ENCODE measurements at regions of chr11 and their contacts with region 1.

Region 1: GRCh38 chr11:61567286-61568061 is 13.4 kb downstream of the SYT7 start:
- H3K4me3 ChIP-seq: no peak overlapping the region; the same call in 1 of the 2 replicates
- H3K27ac ChIP-seq: no peak overlapping the region
- H3K4me1 ChIP-seq: no peaks in the 10 kb centered on the region
- CTCF ChIP-seq: 0 out of 2 replicates have a peak, but pooled peaks have one; percentile 29

Region 2: GRCh38 chr11:61532139-61533038 is 35.1 kb before region 1 on chr11:
- CTCF ChIA-PET with region 1: interaction called, 17 read pairs
- POLR2A ChIA-PET with region 1: no interaction called
- H3K4me3 ChIP-seq: no peak overlapping the region
- H3K27ac ChIP-seq: no peak overlapping the region
- H3K4me1 ChIP-seq: no peaks in the 10 kb centered on the region
- CTCF ChIP-seq: peak; percentile 45; the same call in 1 of the 2 replicates

Region 3: DNA sequence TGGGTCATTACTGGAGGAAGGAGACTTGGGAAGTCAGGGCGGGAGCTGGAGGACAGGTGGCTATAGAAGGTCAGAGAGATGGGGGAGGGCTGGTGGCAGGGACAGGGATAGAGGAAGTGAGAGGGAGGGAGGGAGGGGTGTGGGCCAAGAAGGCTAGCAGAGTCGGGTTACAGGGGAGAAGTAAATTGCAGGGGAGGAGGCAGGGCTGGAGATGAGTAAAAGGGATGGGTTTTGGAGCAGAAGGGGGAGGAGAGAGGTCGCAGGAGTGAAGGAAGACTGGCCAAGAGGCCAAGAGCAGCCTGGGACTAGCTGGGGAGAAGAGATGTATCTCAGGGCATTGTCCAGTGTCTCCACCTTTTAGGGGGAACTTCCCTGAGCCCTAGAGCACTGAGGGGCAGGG is 25.9 kb before region 1 on chr11:
- CTCF ChIA-PET with region 1: interaction called, 11 read pairs
- POLR2A ChIA-PET with region 1: no interaction called
- H3K4me3 ChIP-seq: no peak overlapping the region
- H3K27ac ChIP-seq: no peak overlapping the region
- H3K4me1 ChIP-seq: no peaks in the 10 kb centered on the region
- CTCF ChIP-seq: no peak

Region 4: DNA sequence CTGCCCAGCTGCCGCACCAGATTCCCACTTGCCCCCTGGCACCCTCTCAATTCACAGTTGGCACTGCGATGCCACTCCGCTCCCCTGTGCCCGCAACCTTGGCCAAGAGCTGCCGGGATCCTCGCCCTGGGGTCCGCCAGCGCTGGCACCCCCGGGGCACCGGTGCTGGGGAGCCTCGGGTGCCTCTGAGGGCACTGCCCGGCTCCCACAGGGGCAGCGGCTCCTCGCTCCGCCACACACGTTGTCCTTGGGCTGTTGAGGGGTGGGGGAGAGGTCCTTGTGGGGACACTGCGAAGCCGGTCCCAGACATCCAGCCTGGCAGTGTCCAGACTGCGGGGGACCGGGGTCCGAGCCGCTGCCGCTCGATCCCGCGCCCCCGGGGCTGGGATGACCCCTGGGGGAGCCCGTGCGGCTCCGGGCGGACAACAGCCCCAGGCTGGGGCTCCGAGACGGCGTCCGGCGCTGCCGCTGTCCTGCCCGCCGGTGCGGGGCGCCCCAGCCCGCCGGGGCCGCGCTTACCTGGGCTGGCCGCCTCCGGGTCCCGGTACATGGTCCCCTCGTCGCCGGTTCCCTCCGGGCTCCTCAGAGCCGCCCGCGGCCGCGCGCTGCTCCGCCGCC is 12.9 kb after region 1 on chr11:
- CTCF ChIA-PET with region 1: interaction called, 27 read pairs
- POLR2A ChIA-PET with region 1: interaction called, 10 read pairs
- H3K4me3 ChIP-seq: peak overlapping the region; percentile 28
- H3K27ac ChIP-seq: no peak overlapping the region; the same call in 1 of the 2 replicates
- H3K4me1 ChIP-seq: no peaks in the 10 kb centered on the region; the same call in 1 of the 2 replicates
- CTCF ChIP-seq: no peak

Region 5: GRCh38 chr11:61627567-61628445 is 60.3 kb after region 1 on chr11:
- CTCF ChIA-PET with region 1: interaction called, 12 read pairs
- POLR2A ChIA-PET with region 1: no interaction called
- H3K4me3 ChIP-seq: no peak overlapping the region
- H3K27ac ChIP-seq: no peak overlapping the region
- H3K4me1 ChIP-seq: no peaks in the 10 kb centered on the region
- CTCF ChIP-seq: 0 out of 2 replicates have a peak, but pooled peaks have one; percentile 31

Region 6: DNA sequence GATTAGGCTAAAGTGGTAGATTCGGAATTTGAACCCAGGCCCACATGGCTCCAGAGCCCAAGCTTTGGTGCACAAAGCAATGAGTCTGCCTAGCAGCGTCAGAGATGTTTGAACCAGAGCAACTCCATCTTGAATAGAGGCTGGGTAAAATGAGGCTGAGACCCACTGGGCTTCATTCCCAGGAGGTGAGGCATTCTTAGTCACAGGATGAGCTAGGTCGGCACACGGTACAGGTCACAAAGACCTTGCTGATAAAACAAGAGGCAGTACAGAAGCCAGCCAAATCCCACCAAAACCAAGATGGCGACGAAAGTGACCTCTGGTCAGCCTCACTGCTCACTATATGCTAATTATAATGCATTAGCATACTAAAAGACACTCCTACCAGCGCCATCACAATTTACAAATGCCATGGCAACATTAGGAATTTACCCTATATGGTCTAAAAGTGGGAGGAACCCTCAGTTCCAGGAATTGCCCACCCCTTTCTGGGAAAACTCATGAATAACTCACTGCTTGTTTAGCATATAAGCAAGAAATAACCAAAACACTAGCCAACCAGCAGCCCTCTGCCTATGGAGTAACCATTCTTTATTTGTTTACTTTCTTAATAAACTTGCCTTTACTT is 72.5 kb after region 1 on chr11:
- CTCF ChIA-PET with region 1: interaction called, 10 read pairs
- POLR2A ChIA-PET with region 1: no interaction called
- H3K4me3 ChIP-seq: no peak overlapping the region
- H3K27ac ChIP-seq: no peak overlapping the region
- H3K4me1 ChIP-seq: no peaks in the 10 kb centered on the region
- CTCF ChIP-seq: no peak

Measured in HEK293 (cell line).